Activated CD4-positive, alpha-beta T cell treated with anti-CD3 and anti-CD28 coated beads, Interleukin-2, amount 10 ng/mL, durations not matched to agents 24 days and 14 days (primary cell): ENCODE measurements at regions of chr4 and their contacts with region 1.

Region 1: DNA sequence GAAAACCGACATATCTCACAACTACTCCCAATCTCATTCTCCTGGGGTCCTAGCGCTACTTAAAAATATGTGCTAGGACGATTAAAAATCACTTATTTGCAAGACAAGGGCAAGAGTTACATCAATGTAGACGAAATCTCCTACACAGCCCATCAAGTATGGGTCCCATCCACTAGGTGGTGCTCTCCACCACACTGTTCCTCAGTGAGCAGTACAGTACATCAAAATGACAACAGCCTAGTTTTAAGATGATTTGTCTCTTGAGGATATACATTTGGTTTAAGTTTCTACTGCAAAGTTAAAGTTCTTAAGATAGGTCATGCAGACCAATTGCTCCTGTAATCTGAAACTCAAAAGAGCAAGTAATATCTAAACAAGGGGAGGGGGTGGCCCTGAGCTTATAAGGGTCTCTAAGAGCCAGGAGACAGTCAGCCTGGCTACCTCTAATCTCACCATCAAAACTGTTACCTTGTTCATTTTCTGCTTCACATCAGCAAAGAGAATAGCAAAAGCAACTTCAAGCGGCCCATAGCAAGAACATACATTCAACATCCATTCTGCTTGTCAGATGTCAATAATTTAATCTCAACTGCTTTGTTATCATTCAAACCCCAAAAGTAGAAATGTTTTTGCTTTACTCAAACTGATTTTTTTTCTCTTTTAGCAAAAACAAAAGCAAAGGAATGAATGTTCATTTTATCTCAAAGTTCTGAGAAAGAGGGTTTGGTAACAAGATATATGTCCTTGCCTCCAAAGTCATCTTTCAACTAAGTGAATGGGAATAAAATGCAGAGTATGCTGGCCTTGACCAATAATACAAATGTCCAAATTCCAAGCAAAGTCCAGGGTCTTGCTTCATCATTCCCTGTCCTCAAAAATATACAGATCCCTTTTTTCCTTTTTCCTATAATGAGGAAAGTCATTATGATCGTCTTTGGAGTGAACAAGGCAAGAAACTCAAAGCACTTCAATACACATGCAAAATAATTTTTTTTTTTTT is 53.1 kb downstream of the STX18 start:
- DNase-seq: peak; percentile 91
- H3K4me3 Mint-ChIP-seq: no peak overlapping the region
- H3K27ac Mint-ChIP-seq: no peak overlapping the region
- H3K4me1 Mint-ChIP-seq: peaks cover 6% of the 10 kb centered on the region
- H3K27me3 Mint-ChIP-seq: no peaks in the 10 kb centered on the region

Region 2: DNA sequence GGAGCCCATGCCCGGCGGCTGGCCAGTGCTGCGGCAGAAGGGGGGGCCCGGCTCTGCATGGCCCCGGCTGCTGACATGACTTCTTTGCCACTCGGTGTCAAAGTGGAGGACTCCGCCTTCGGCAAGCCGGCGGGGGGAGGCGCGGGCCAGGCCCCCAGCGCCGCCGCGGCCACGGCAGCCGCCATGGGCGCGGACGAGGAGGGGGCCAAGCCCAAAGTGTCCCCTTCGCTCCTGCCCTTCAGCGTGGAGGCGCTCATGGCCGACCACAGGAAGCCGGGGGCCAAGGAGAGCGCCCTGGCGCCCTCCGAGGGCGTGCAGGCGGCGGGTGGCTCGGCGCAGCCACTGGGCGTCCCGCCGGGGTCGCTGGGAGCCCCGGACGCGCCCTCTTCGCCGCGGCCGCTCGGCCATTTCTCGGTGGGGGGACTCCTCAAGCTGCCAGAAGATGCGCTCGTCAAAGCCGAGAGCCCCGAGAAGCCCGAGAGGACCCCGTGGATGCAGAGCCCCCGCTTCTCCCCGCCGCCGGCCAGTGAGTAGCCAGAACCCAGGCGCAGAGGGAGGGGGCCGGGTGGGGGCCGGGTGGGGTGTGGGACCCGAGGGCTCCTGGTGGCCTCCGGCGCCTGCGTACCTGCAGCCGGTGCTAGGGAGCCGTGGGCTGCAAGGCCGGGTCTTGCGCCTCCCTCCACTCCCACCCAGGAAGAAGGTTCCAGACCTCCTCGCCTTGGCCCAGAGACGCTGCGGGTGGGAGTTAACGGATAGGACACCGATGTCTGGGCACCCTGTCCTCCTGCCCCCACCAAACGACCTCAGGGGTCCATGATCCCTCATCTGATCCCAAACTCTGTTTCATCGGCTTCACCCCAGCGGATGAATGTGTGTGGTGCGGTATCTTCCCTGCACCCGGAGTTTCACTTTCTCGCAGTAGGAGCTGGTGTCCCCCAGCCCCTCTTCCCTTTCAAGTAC is 371.4 kb after region 1 on chr4:
- intact Hi-C with region 1: loop called (anchors 2 kb)
- DNase-seq: no peak
- H3K4me3 Mint-ChIP-seq: peak overlapping the region; percentile 66
- H3K27ac Mint-ChIP-seq: peak overlapping the region; percentile 4
- H3K4me1 Mint-ChIP-seq: peaks cover 9% of the 10 kb centered on the region
- H3K27me3 Mint-ChIP-seq: peaks cover 75% of the 10 kb centered on the region

Region 3: GRCh38 chr4:4950561-4951290 is 462.0 kb after region 1 on chr4:
- intact Hi-C with region 1: no loop called
- DNase-seq: no peak
- H3K4me3 Mint-ChIP-seq: no peak overlapping the region
- H3K27ac Mint-ChIP-seq: no peak overlapping the region
- H3K4me1 Mint-ChIP-seq: no peaks in the 10 kb centered on the region
- H3K27me3 Mint-ChIP-seq: no peaks in the 10 kb centered on the region

Region 4: GRCh38 chr4:4995103-4995907 is 506.6 kb after region 1 on chr4:
- intact Hi-C with region 1: loop called (anchors 2 kb)
- DNase-seq: peak; percentile 78
- H3K4me3 Mint-ChIP-seq: no peak overlapping the region
- H3K27ac Mint-ChIP-seq: no peak overlapping the region
- H3K4me1 Mint-ChIP-seq: no peaks in the 10 kb centered on the region
- H3K27me3 Mint-ChIP-seq: peaks cover 5% of the 10 kb centered on the region

Region 5: GRCh38 chr4:5812506-5813229 is 1324.0 kb after region 1 on chr4:
- intact Hi-C with region 1: loop called (anchors 5 kb)
- DNase-seq: peak; percentile 75
- H3K4me3 Mint-ChIP-seq: no peak overlapping the region
- H3K27ac Mint-ChIP-seq: no peak overlapping the region
- H3K4me1 Mint-ChIP-seq: no peaks in the 10 kb centered on the region
- H3K27me3 Mint-ChIP-seq: no peaks in the 10 kb centered on the region